CD8-positive, alpha-beta T cell (primary cell): ENCODE measurements at regions of chrX and their contacts with region 1.

Region 1: DNA sequence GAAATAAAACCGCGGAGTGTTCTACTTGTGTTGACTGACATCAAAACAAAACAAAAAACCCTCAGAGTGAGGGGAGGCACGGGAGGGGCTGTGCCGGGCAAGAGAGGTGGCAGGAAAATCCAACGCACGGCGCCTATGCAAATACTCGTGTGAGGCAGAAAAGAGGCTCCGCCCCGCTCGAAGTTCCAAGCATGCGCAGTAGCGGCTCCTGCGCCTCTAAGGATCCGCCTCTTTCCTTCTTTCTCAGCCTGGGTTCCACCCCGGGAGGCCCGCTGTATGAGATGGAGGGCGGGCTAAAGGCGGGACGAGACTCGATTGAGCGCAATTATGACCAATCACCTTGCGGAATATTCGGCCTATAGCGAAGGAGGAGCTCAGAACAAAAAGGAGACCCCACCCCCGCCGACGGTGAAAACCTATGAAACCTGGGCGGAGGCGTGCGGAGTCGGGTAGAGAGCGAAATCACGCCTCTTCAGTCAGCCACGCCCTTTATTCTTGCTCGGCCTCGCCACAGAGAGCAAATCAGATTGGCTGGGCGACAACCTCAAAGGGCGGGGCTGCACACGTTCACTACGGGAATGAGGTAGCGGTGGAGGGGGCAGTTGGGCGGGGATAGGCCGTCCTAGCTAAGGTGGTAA is 720 bp upstream of the CDK16 start:
- DNase-seq: peak; percentile 83 to 98 (median 96)
- ATAC-seq: peak; percentile 80
- H3K4me3 ChIP-seq: peak overlapping the region; percentile 79
- H3K4me3 Mint-ChIP-seq: peak overlapping the region; percentile 93
- H3K27ac ChIP-seq: peak overlapping the region; percentile 98 to 100
- H3K27ac Mint-ChIP-seq: peak overlapping the region; percentile 98
- H3K4me1 ChIP-seq: peaks cover 26% of the 10 kb centered on the region
- H3K4me1 Mint-ChIP-seq: peaks cover 35% of the 10 kb centered on the region
- H3K27me3 ChIP-seq: no peaks in the 10 kb centered on the region
- H3K27me3 Mint-ChIP-seq: no peaks in the 10 kb centered on the region
- CTCF ChIP-seq: no peak

Region 2: DNA sequence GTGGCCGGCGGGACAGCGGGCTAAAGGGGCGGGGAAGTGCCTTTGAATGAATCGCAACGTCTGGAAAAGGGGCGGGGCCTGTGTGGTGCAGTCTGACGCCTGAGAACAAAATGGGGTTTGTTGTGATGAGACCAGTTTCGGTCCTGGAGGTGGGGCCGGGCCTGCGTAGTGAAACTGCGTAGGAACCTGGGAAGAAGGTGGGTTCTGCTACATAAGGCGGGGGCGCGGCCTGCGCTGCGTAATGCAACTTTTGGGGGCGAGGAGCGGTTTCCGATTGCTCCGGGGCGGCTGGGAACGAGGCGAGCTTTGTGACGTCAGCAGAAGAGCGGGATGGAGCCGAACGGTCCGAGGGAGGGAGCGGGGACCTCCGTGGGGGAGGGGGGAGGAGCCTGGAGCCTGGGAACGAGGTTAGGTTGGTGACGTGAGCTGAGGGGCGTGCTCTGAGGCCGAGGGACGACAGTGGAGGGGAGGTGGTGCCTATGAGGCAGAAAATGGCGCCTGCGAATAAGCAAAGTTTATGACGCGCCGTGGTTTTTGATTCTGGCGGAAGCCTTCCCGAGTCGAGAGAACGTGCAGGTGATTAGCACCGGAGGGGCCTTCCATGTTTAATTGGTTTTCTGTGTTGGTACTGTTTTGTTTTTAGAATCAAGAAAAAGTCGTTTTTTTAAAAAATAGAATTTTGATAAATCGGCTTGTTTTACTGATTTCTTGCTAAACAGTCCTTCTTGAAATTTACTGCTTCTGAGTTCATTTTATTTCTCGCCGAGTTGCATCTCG is 15.8 kb after region 1 on chrX:
- CTCF ChIA-PET with region 1: no interaction called
- POLR2A ChIA-PET with region 1: interaction called, 57 read pairs
- intact Hi-C with region 1: loop called (anchors 1 kb)
- DNase-seq: peak; percentile 81 to 98 (median 95)
- ATAC-seq: peak; percentile 89
- H3K4me3 ChIP-seq: peak overlapping the region; percentile 77 to 96
- H3K4me3 Mint-ChIP-seq: peak overlapping the region; percentile 96
- H3K27ac ChIP-seq: peak overlapping the region; percentile 100
- H3K27ac Mint-ChIP-seq: peak overlapping the region; percentile 99
- H3K4me1 ChIP-seq: peaks cover 34% of the 10 kb centered on the region
- H3K4me1 Mint-ChIP-seq: peaks cover 40% of the 10 kb centered on the region
- H3K27me3 ChIP-seq: no peaks in the 10 kb centered on the region
- H3K27me3 Mint-ChIP-seq: no peaks in the 10 kb centered on the region
- CTCF ChIP-seq: no peak

Region 3: GRCh38 chrX:47446431-47446830 is 228.7 kb after region 1 on chrX:
- CTCF ChIA-PET with region 1: no interaction called
- POLR2A ChIA-PET with region 1: no interaction called
- intact Hi-C with region 1: no loop called
- DNase-seq: no peak
- ATAC-seq: no peak
- H3K4me3 ChIP-seq: no peak overlapping the region
- H3K4me3 Mint-ChIP-seq: no peak overlapping the region
- H3K27ac ChIP-seq: no peak overlapping the region
- H3K27ac Mint-ChIP-seq: no peak overlapping the region
- H3K4me1 ChIP-seq: no peaks in the 10 kb centered on the region
- H3K4me1 Mint-ChIP-seq: no peaks in the 10 kb centered on the region
- H3K27me3 ChIP-seq: no peaks in the 10 kb centered on the region
- H3K27me3 Mint-ChIP-seq: no peaks in the 10 kb centered on the region
- CTCF ChIP-seq: no peak